GM12878 (cell line): ENCODE measurements at regions of chr4 and their contacts with region 1.

Region 1: DNA sequence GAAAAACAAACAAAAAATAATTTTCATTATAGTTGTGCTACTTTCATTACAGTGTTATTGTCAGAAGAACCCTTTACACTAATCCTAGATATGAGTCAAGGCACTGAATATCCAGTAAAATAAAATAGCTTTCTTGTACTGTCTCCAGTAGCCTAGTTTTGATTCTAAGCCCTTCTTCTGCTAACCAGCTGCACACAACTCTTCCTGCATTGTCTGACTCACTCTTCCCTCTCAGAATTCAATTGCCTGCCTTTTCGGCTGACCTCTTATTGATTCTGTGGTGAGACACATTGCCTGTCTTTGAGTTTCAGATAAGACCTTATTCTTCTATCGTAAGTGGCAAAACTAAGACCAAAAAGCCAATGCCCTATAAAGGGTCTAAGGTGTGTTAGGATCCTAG is 26.7 kb upstream of the PCDH18 start:
- DNase-seq: no peak
- ATAC-seq: peak; percentile 44
- H3K4me3 ChIP-seq: no peak overlapping the region
- H3K27ac ChIP-seq: no peak overlapping the region
- H3K4me1 ChIP-seq: no peaks in the 10 kb centered on the region
- H3K27me3 ChIP-seq: no peaks in the 10 kb centered on the region
- CTCF ChIP-seq: no peak
- EP300 ChIP-seq: no peak
- POLR2A ChIP-seq: no peak
- RAD21 ChIP-seq: no peak

Region 2: DNA sequence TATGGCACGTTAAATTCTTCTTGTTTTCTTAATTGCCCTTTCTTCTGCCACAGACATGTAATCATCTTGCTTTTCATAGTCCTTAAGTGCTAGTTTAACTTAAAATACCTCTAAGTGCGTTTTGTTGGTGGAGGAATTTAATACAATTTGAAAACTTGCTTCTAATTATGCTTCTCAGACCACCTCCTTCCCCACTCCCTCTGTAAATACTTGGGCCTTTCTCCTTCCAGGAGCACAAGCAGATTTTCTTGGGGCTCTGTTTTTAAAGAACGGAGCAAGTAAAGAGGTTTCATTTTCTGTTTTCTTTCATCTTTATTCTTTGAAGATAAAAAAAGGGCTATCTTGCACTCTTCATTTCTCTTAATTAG is 26.1 kb before region 1 on chr4:
- CTCF ChIA-PET with region 1: interaction called, 5 read pairs
- POLR2A ChIA-PET with region 1: no interaction called
- RAD21 ChIA-PET with region 1: interaction called, 4 read pairs
- SMC1A ChIA-PET with region 1: interaction called, 11 read pairs
- in situ Hi-C with region 1: no loop called
- intact Hi-C with region 1: no loop called
- DNase-seq: no peak
- ATAC-seq: peak; percentile 8; the same call in 2 of the 3 replicates
- H3K4me3 ChIP-seq: peak overlapping the region; percentile 73
- H3K27ac ChIP-seq: peak overlapping the region; percentile 29; the same call in 1 of the 2 replicates
- H3K4me1 ChIP-seq: no peaks in the 10 kb centered on the region
- H3K27me3 ChIP-seq: no peaks in the 10 kb centered on the region
- CTCF ChIP-seq: no peak
- EP300 ChIP-seq: no peak
- POLR2A ChIP-seq: no peak
- RAD21 ChIP-seq: no peak

Region 3: GRCh38 chr4:137541876-137542646 is 16.9 kb before region 1 on chr4:
- CTCF ChIA-PET with region 1: interaction called, 4 read pairs
- POLR2A ChIA-PET with region 1: no interaction called
- RAD21 ChIA-PET with region 1: no interaction called
- SMC1A ChIA-PET with region 1: interaction called, 18 read pairs
- in situ Hi-C with region 1: no loop called
- intact Hi-C with region 1: no loop called
- DNase-seq: no peak
- ATAC-seq: peak; percentile 63
- H3K4me3 ChIP-seq: no peak overlapping the region
- H3K27ac ChIP-seq: no peak overlapping the region
- H3K4me1 ChIP-seq: no peaks in the 10 kb centered on the region
- H3K27me3 ChIP-seq: no peaks in the 10 kb centered on the region
- CTCF ChIP-seq: no peak
- EP300 ChIP-seq: no peak
- POLR2A ChIP-seq: no peak
- RAD21 ChIP-seq: no peak

Region 4: DNA sequence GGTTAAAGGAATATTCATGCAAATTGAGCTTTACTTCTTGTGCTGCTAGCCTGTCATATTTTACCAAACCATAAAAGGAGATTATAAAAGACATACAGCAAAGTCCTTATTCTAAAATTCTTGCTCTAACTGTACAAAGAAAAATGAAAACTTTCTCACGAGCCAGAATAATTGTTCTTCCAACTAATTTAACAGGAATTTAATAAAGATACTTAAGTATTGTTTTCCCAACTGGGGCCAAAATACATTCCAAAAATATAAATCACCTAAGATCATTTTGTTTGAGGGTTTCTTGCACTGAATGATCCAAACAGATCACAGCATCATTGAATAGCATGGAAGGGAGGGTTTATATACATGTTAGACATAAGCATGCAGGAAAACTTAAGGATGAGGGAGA is 100.5 kb after region 1 on chr4:
- CTCF ChIA-PET with region 1: no interaction called
- POLR2A ChIA-PET with region 1: no interaction called
- RAD21 ChIA-PET with region 1: no interaction called
- SMC1A ChIA-PET with region 1: no interaction called
- in situ Hi-C with region 1: no loop called
- intact Hi-C with region 1: no loop called
- DNase-seq: no peak
- ATAC-seq: no peak
- H3K4me3 ChIP-seq: no peak overlapping the region
- H3K27ac ChIP-seq: no peak overlapping the region
- H3K4me1 ChIP-seq: no peaks in the 10 kb centered on the region
- H3K27me3 ChIP-seq: no peaks in the 10 kb centered on the region
- CTCF ChIP-seq: no peak
- EP300 ChIP-seq: no peak
- POLR2A ChIP-seq: no peak
- RAD21 ChIP-seq: no peak